Heart left ventricle (tissue), 16 donors: ENCODE measurements at regions of chr10 and their contacts with region 1.

Region 1: GRCh38 chr10:124000792-124001201 is 92.6 kb downstream of the CHST15 start:
- DNase-seq: no peak
- ATAC-seq: no peak
- H3K4me3 ChIP-seq: no peak overlapping the region
- H3K27ac ChIP-seq: no peak overlapping the region
- H3K4me1 ChIP-seq: peaks cover 0 to 38% (median 0%) of the 10 kb centered on the region in 12 donors
- H3K27me3 ChIP-seq: no peaks in the 10 kb centered on the region
- CTCF ChIP-seq: no peak
- POLR2A ChIP-seq: no peak

Region 2: GRCh38 chr10:123367195-123367594 is 633.6 kb before region 1 on chr10:
- intact Hi-C with region 1: no loop called
- DNase-seq: no peak
- ATAC-seq: no peak
- H3K4me3 ChIP-seq: no peak overlapping the region
- H3K27ac ChIP-seq: no peak overlapping the region
- H3K4me1 ChIP-seq: no peaks in the 10 kb centered on the region
- H3K27me3 ChIP-seq: no peaks in the 10 kb centered on the region
- CTCF ChIP-seq: no peak
- POLR2A ChIP-seq: no peak

Region 3: DNA sequence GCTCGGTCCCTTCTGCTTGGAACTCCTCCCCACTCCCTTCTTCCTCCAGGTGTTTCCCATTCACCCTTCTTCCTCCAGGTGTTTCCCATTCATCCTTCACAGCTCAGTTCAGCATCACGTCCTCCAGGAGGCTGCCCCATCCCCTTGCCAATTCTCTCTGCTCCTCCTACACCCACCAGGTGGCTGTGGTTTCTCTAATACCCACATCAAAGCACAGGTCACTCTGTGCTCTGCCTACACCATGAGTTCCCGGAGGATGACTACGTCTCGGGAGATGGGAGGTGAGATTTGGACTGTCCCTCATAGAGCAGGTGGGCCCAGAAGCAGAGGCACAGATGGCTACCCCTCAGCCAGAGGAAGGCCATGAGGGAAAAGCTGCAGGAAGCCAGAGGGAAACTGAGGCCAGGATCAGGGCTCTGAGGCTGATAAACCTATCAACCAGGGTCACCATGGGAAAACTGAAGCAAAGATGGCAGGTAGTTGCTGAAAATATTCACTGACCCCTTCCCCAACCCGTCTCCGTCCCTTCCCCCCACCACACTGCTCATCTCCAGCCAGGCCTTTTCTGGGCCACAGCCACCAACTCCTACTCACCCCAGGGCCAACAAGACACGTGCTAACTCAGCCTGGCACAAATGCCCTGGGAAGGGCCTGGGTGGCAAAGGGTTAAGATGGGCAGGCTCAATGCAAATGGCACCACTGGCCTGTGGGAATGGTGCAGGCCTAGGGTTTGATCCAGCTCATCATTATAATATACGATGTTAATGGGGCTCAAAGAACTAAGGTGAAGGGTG is 52.6 kb before region 1 on chr10:
- intact Hi-C with region 1: no loop called
- DNase-seq: no peak
- ATAC-seq: no peak
- H3K4me3 ChIP-seq: no peak overlapping the region
- H3K27ac ChIP-seq: no peak overlapping the region
- H3K4me1 ChIP-seq: no peaks in the 10 kb centered on the region
- H3K27me3 ChIP-seq: peaks cover 0 to 7% (median 0%) of the 10 kb centered on the region in 9 donors
- CTCF ChIP-seq: no peak
- POLR2A ChIP-seq: no peak

Region 4: DNA sequence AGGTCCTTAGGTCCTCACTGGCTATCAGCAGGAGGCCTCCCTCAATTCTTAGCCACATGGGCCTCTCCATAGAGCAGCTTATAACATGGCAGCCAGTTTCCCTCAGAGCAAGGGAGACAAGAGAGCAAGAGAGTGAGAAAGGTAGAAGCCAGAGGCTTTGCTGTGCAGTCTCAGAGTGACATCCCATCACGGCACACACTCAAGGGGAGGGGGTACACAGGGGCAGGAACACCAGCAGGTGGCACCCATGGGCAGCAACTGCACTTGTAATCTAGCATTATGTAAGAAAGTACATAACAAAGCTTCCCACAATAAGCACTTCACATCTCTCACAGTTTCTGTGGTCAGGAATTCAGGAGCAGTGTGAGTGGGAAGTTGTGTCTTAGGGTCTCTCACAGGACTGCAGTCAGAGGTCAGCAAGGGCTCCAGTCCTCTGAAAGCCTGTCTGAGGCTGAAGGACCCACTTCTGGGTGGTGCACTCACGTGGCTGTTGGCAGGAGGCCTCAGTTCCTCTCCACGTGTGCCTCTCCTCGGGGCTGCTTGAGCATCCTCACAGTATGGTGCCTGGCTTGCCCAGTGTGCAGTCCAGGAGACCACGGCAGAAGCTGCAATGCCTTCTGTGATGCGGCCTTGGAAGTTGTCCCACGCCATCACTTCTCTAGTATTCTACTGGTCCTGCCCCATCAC is 258.5 kb after region 1 on chr10:
- intact Hi-C with region 1: loop called in 6 of 10 experiments (anchors 5 to 10 kb)
- DNase-seq: no peak
- ATAC-seq: peak in 1 of 4 donors; percentile 19
- H3K4me3 ChIP-seq: no peak overlapping the region
- H3K27ac ChIP-seq: no peak overlapping the region
- H3K4me1 ChIP-seq: no peaks in the 10 kb centered on the region
- H3K27me3 ChIP-seq: no peaks in the 10 kb centered on the region
- CTCF ChIP-seq: no peak
- POLR2A ChIP-seq: no peak